Spleen (tissue), 13 donors: ENCODE measurements at regions of chr20 and their contacts with region 1.

Region 1: GRCh38 chr20:51525241-51526129 is 17.0 kb downstream of the NFATC2 start:
- DNase-seq: peak; percentile 83
- H3K4me3 ChIP-seq: peak overlapping the region in 5 of 8 donors; percentile 1 to 49 (median 13)
- H3K27ac ChIP-seq: peak overlapping the region; percentile 31 to 77 (median 62)
- H3K4me1 ChIP-seq: peaks cover 38 to 90% (median 56%) of the 10 kb centered on the region in 6 donors
- H3K27me3 ChIP-seq: no peaks in the 10 kb centered on the region
- CTCF ChIP-seq: no peak
- POLR2A ChIP-seq: no peak

Region 2: DNA sequence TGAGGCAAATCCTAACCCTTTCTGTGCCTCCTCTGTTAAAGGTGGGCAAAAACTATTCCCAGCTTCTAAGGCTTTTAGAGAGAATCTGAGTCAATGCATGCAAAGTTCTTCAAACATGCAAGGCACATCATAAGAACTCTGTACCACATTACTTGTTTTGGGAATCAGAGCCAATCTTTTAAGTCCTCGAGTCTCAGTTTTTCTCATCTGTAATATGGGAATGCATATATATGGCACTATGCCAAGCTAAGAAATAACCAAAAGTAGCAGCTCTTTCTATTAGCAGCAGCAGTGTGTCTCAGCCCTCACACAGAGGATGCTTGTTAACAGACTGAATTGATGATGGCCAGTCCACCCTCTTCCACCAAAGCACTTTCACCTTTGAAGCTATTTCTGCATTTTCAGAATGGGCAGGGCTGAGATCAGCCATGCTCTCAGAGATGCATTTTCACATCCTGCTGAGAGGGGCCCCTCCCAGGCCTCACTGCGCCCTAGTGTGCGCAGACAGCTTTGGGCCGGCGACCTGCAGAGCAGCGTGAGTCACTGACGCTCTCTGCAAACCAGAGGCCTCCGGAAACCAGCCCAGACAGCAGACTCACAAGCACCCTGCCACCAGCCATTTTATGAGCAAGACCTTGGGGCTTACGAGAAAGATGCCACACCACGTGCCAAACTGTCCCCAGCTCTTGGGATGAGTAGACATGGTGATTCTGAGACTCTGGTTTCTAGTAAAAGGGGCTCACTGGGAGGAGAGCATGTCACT is 121.0 kb before region 1 on chr20:
- intact Hi-C with region 1: loop called (anchors 10 kb)
- DNase-seq: peak; percentile 95
- H3K4me3 ChIP-seq: no peak overlapping the region
- H3K27ac ChIP-seq: peak overlapping the region; percentile 63 to 94 (median 82)
- H3K4me1 ChIP-seq: peaks cover 38 to 94% (median 63%) of the 10 kb centered on the region in 6 donors
- H3K27me3 ChIP-seq: no peaks in the 10 kb centered on the region
- CTCF ChIP-seq: peak in 1 of 11 experiments; percentile 13
- POLR2A ChIP-seq: peak in 1 of 3 donors; percentile 14